GM23248 (cell line): ENCODE measurements at regions of chr4 and their contacts with region 1.

Region 1: DNA sequence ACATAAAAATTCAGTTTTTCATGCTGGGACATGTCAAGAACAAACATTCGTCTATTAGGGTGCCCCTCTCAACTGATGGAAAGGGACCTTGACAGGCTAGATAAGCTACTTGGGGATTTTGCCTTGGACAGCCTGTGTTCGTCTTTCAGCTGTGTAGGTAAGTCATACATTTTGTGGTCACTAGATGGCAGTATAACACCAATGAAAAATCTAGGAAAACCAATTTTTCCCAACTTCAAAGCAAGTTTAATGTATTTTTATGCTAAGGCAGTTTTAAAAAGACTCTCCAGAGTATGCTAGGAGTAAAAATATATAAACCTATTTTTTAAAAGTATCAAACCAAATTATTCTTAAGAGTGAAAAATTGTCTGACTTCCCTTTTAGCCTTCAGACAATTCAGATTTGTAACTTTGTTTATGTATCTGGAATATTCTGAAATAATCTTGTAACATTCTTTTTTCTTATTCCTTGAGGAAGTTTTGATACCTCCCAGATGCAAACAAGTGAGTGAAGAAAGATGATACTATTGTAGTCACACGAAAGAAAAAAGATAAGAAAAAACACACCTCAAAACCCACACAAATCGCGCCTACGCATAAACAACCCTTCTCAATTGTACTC is 158.3 kb downstream of the CPE start:
- DNase-seq: peak; percentile 55
- H3K4me3 ChIP-seq: no peak overlapping the region
- H3K27ac ChIP-seq: no peak overlapping the region
- H3K4me1 ChIP-seq: no peaks in the 10 kb centered on the region
- H3K27me3 ChIP-seq: no peaks in the 10 kb centered on the region; the same call in 1 of the 2 replicates

Region 2: GRCh38 chr4:165621983-165622382 is 84.8 kb after region 1 on chr4:
- in situ Hi-C with region 1: no loop called
- DNase-seq: no peak
- H3K4me3 ChIP-seq: no peak overlapping the region
- H3K27ac ChIP-seq: no peak overlapping the region
- H3K4me1 ChIP-seq: no peaks in the 10 kb centered on the region
- H3K27me3 ChIP-seq: no peaks in the 10 kb centered on the region

Region 3: GRCh38 chr4:166091912-166092510 is 554.9 kb after region 1 on chr4:
- in situ Hi-C with region 1: loop called (anchors 5 kb)
- DNase-seq: peak; percentile 66
- H3K4me3 ChIP-seq: no peak overlapping the region
- H3K27ac ChIP-seq: no peak overlapping the region
- H3K4me1 ChIP-seq: no peaks in the 10 kb centered on the region
- H3K27me3 ChIP-seq: no peaks in the 10 kb centered on the region